Activated CD8-positive, alpha-beta T cell treated with anti-CD3 and anti-CD28 coated beads for 36 hours (primary cell): ENCODE measurements at regions of chr14 and their contacts with region 1.

Region 1: GRCh38 chr14:20697273-20698017 is 8.9 kb downstream of the ANG start:
- DNase-seq: peak; percentile 78
- ATAC-seq: peak; percentile 93
- H3K4me3 Mint-ChIP-seq: no peak overlapping the region
- H3K27ac Mint-ChIP-seq: no peak overlapping the region
- H3K4me1 Mint-ChIP-seq: peaks cover under 1% of the 10 kb centered on the region
- H3K27me3 Mint-ChIP-seq: peaks cover 4% of the 10 kb centered on the region
- CTCF ChIP-seq: peak; percentile 75

Region 2: DNA sequence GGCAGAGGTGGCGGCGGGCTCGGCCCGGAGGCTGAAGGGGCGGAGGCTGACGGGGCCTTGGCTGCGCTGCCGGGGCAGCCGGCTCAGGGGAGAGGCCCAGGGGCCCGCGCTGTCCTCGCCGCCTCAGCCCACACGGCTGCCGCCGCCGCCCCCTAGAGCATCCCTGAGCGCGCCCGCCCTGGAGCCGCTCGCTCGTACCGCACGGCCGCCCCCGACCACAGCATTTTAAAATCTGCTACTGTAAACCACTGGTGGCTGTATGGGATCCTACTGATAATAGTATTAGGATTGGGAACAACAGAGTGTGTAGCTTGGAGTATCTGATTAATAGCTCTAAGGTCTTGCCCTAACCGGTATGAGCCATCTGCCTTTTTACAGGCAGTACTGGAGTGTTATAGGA is 26.0 kb after region 1 on chr14:
- CTCF ChIA-PET with region 1: no interaction called
- POLR2A ChIA-PET with region 1: no interaction called
- intact Hi-C with region 1: no loop called
- DNase-seq: no peak
- ATAC-seq: no peak
- H3K4me3 Mint-ChIP-seq: no peak overlapping the region
- H3K27ac Mint-ChIP-seq: no peak overlapping the region
- H3K4me1 Mint-ChIP-seq: no peaks in the 10 kb centered on the region
- H3K27me3 Mint-ChIP-seq: peaks cover 31% of the 10 kb centered on the region
- CTCF ChIP-seq: no peak

Region 3: GRCh38 chr14:20873370-20874177 is 176.1 kb after region 1 on chr14:
- CTCF ChIA-PET with region 1: interaction called, 21 read pairs
- POLR2A ChIA-PET with region 1: no interaction called
- intact Hi-C with region 1: no loop called
- DNase-seq: peak; percentile 93
- ATAC-seq: peak; percentile 98
- H3K4me3 Mint-ChIP-seq: peak overlapping the region; percentile 41
- H3K27ac Mint-ChIP-seq: no peak overlapping the region
- H3K4me1 Mint-ChIP-seq: peaks cover 9% of the 10 kb centered on the region
- H3K27me3 Mint-ChIP-seq: peaks cover 4% of the 10 kb centered on the region
- CTCF ChIP-seq: peak; percentile 73